B cell (primary cell): ENCODE measurements at regions of chr2 and their contacts with region 1.

Region 1: DNA sequence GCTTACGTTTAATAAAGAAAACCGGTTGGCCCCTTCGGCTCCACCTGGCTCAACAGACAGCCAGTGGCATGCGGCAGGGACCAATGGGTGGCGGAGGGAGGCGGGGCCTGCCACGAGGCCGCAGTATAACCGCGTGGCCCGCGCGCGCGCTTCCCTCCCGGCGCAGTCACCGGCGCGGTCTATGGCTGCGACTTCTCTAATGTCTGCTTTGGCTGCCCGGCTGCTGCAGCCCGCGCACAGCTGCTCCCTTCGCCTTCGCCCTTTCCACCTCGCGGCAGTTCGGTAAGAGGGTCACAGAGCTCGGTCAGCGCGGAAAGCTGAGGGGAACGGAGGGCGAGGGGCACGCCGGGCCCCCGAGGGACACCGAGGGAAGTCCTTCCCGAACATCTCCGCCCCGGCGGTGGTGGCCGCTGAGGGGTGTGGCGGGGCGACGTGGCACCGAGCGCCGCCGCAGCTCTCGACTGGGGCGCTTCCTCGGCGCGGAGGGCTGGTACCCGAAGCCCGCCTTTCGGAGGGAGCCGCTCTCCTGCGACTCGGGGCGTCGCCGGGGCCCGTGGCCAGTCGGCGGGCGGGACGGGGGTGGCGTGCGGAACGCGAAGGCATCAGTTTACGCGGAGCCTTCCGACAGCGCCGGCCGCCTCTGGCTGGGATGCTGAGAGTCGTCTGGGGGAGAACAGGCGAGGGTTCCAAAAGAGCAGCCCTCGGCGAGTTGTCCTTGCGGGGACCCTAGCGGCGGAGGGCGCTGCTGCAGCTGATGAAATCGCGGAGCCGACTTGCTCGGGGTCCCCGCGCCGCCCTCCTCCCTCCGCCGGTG is at the start of gene MTHFD2:
- DNase-seq: peak; percentile 94
- ATAC-seq: peak; percentile 87
- H3K4me3 ChIP-seq: peak within 1 kb of the TSS; percentile 30 to 79 (median 74)
- H3K4me3 Mint-ChIP-seq: peak within 1 kb of the TSS; percentile 98
- H3K27ac ChIP-seq: peak within 1 kb of the TSS; percentile 92 to 96
- H3K27ac Mint-ChIP-seq: peak within 1 kb of the TSS; percentile 99
- H3K4me1 ChIP-seq: peaks cover 14 to 23% of the 10 kb centered on the region in 2 donors
- H3K4me1 Mint-ChIP-seq: peaks cover 24% of the 10 kb centered on the region
- H3K27me3 ChIP-seq: no peaks in the 10 kb centered on the region
- H3K27me3 Mint-ChIP-seq: no peaks in the 10 kb centered on the region
- CTCF ChIP-seq: peak; percentile 93
- total RNA-seq, gene MTHFD2: 17.4 and 18.0 TPM in 2 replicates

Region 2: DNA sequence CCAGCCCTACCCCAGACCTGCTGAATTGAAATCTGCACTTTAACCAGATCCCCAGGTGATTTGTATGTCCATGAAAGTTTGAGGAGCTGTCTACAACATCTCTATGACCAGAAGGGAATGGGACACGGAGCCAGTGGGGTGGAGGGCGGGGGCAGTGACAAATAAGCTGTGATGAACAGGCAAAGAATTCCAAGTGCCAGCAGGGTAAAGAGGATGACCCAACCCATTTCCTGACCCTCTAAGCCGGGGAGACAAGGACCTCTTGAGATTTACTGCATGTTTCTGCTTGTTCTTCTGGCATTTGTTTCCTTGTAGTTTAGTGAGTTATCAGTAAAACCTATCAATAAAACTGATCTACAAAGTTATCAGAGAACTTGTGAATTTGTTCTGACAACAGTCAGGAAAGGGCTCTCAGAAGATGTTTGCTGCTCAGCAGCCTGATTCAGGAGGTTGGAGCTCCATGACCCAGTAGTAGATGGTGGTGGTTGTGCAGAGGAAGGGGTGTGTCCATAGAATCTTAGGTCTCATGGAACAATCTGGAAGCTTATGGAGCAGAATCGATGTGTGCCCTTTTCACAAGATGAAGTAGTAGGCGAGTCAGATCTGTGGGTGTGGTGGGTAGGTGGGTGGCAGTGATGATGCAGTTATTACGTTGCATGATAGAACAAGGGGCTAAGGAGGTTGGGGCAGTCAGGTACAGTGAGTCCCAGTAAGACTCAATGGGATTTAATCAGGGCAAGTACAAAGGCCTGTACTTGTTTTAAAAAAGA is 205.1 kb before region 1 on chr2:
- CTCF ChIA-PET with region 1: no interaction called
- POLR2A ChIA-PET with region 1: no interaction called
- intact Hi-C with region 1: no loop called
- DNase-seq: no peak
- ATAC-seq: no peak
- H3K4me3 ChIP-seq: no peak overlapping the region
- H3K4me3 Mint-ChIP-seq: no peak overlapping the region
- H3K27ac ChIP-seq: no peak overlapping the region
- H3K27ac Mint-ChIP-seq: peak overlapping the region; percentile 46
- H3K4me1 ChIP-seq: peaks cover 25 to 37% of the 10 kb centered on the region in 2 donors
- H3K4me1 Mint-ChIP-seq: peaks cover 72% of the 10 kb centered on the region
- H3K27me3 ChIP-seq: no peaks in the 10 kb centered on the region
- H3K27me3 Mint-ChIP-seq: no peaks in the 10 kb centered on the region
- CTCF ChIP-seq: no peak

Region 3: GRCh38 chr2:74063486-74063885 is 135.2 kb before region 1 on chr2:
- CTCF ChIA-PET with region 1: no interaction called
- POLR2A ChIA-PET with region 1: no interaction called
- intact Hi-C with region 1: no loop called
- DNase-seq: no peak
- ATAC-seq: no peak
- H3K4me3 ChIP-seq: no peak overlapping the region
- H3K4me3 Mint-ChIP-seq: no peak overlapping the region
- H3K27ac ChIP-seq: no peak overlapping the region
- H3K27ac Mint-ChIP-seq: no peak overlapping the region
- H3K4me1 ChIP-seq: no peaks in the 10 kb centered on the region
- H3K4me1 Mint-ChIP-seq: peaks cover 10% of the 10 kb centered on the region
- H3K27me3 ChIP-seq: no peaks in the 10 kb centered on the region
- H3K27me3 Mint-ChIP-seq: no peaks in the 10 kb centered on the region
- CTCF ChIP-seq: no peak

Region 4: GRCh38 chr2:74119912-74120825 is 78.5 kb before region 1 on chr2:
- CTCF ChIA-PET with region 1: interaction called, 4 read pairs
- POLR2A ChIA-PET with region 1: interaction called, 3 read pairs
- intact Hi-C with region 1: loop called (anchors 1 kb)
- DNase-seq: peak; percentile 91
- ATAC-seq: peak; percentile 96
- H3K4me3 ChIP-seq: peak overlapping the region; percentile 55 to 93 (median 88)
- H3K4me3 Mint-ChIP-seq: peak overlapping the region; percentile 91
- H3K27ac ChIP-seq: peak overlapping the region; percentile 85 to 88
- H3K27ac Mint-ChIP-seq: peak overlapping the region; percentile 94
- H3K4me1 ChIP-seq: peaks cover 0 to 11% of the 10 kb centered on the region in 2 donors
- H3K4me1 Mint-ChIP-seq: peaks cover 8% of the 10 kb centered on the region
- H3K27me3 ChIP-seq: peaks cover 0 to 2% (median 0%) of the 10 kb centered on the region in 4 experiments
- H3K27me3 Mint-ChIP-seq: peaks cover 2% of the 10 kb centered on the region
- CTCF ChIP-seq: peak; percentile 69

Region 5: GRCh38 chr2:74186038-74186437 is 12.6 kb before region 1 on chr2:
- CTCF ChIA-PET with region 1: interaction called, 132 read pairs
- POLR2A ChIA-PET with region 1: interaction called, 120 read pairs
- intact Hi-C with region 1: loop called (anchors 1 kb)
- DNase-seq: peak; percentile 95
- ATAC-seq: peak; percentile 79
- H3K4me3 ChIP-seq: peak overlapping the region in 1 of 5 experiments; percentile 35
- H3K4me3 Mint-ChIP-seq: peak overlapping the region; percentile 80
- H3K27ac ChIP-seq: peak overlapping the region; percentile 57 to 82
- H3K27ac Mint-ChIP-seq: peak overlapping the region; percentile 92
- H3K4me1 ChIP-seq: peaks cover 37 to 49% of the 10 kb centered on the region in 2 donors
- H3K4me1 Mint-ChIP-seq: peaks cover 37% of the 10 kb centered on the region
- H3K27me3 ChIP-seq: no peaks in the 10 kb centered on the region
- H3K27me3 Mint-ChIP-seq: no peaks in the 10 kb centered on the region
- CTCF ChIP-seq: no peak

Region 6: GRCh38 chr2:74226648-74227213 is 28.1 kb after region 1 on chr2:
- CTCF ChIA-PET with region 1: no interaction called
- POLR2A ChIA-PET with region 1: no interaction called
- intact Hi-C with region 1: no loop called
- DNase-seq: no peak
- ATAC-seq: no peak
- H3K4me3 ChIP-seq: no peak overlapping the region
- H3K4me3 Mint-ChIP-seq: no peak overlapping the region
- H3K27ac ChIP-seq: no peak overlapping the region
- H3K27ac Mint-ChIP-seq: no peak overlapping the region
- H3K4me1 ChIP-seq: no peaks in the 10 kb centered on the region
- H3K4me1 Mint-ChIP-seq: no peaks in the 10 kb centered on the region
- H3K27me3 ChIP-seq: no peaks in the 10 kb centered on the region
- H3K27me3 Mint-ChIP-seq: no peaks in the 10 kb centered on the region
- CTCF ChIP-seq: no peak

Region 7: GRCh38 chr2:74421221-74421870 is 222.7 kb after region 1 on chr2 and contains the starts of genes C2orf81 and WDR54:
- CTCF ChIA-PET with region 1: no interaction called
- POLR2A ChIA-PET with region 1: no interaction called
- intact Hi-C with region 1: loop called (anchors 2 kb)
- DNase-seq: peak; percentile 97
- ATAC-seq: peak; percentile 90
- H3K4me3 ChIP-seq: peak within 1 kb of the TSS; percentile 61 to 98 (median 90)
- H3K4me3 Mint-ChIP-seq: peak within 1 kb of the TSS; percentile 98
- H3K27ac ChIP-seq: peak within 1 kb of the TSS; percentile 94
- H3K27ac Mint-ChIP-seq: peak within 1 kb of the TSS; percentile 99
- H3K4me1 ChIP-seq: peaks cover 29 to 41% of the 10 kb centered on the region in 2 donors
- H3K4me1 Mint-ChIP-seq: peaks cover 43% of the 10 kb centered on the region
- H3K27me3 ChIP-seq: no peaks in the 10 kb centered on the region
- H3K27me3 Mint-ChIP-seq: no peaks in the 10 kb centered on the region
- CTCF ChIP-seq: no peak
- total RNA-seq, gene C2orf81: 8.6 and 9.1 TPM in 2 replicates
- total RNA-seq, gene WDR54: 39.0 and 42.2 TPM in 2 replicates